MCF 10A (cell line): ENCODE measurements at regions of chr1 and their contacts with region 1.

Region 1: GRCh38 chr1:10803971-10804820 is 7.8 kb upstream of the CASZ1 start:
- DNase-seq: peak; percentile 80
- H3K4me3 Mint-ChIP-seq: peak overlapping the region; percentile 53
- H3K27ac Mint-ChIP-seq: peak overlapping the region; percentile 95
- H3K4me1 Mint-ChIP-seq: peaks cover 20% of the 10 kb centered on the region
- H3K27me3 Mint-ChIP-seq: peaks cover 10% of the 10 kb centered on the region
- CTCF ChIP-seq: no peak

Region 2: DNA sequence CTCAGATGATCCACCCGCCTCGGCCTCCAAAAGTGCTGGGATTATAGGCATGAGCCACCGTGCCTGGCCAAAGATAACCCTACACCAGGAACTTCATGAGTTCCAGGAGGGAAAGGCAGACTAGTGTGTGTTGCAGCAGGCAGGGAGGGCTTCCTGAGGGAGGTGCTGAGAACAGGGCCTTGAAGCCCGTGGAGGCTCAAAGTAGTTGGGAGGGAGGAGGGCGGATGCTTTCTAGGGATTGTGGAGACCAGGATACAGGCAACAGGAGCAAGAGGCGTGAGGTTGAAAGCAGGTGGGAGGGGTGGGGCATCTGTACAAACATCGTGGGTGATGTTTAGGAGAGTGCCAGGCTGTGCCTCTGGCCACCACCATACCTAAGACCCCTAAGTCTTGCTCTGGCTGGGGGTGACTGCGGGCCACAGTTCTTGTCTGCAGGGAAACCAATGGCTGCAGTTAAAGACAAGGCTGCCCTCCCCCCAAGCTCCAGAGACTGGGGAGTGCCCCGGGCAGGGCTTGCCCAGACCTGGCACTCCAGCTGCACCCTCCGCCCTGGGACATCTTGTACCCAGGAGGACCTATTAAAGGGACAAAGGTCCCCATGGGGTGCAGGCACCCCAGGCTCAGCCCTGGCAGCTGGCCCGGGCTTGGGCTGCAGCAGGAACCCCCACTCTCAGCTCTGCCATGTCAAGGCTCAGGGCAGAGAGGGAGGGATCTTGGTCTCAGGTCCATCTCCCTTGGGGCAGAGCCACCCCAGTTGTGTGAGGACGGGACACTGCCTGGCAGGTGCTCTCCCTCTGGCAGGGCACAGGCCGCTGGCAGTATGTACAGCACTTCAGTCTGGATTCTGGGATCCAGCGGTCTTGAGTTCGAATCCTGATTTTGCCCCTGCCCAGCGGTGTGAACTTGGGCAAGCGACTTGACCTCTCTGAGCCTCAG is 14.3 kb after region 1 on chr1:
- CTCF ChIA-PET with region 1: interaction called, 4 read pairs
- POLR2A ChIA-PET with region 1: interaction called, 22 read pairs
- intact Hi-C with region 1: no loop called
- DNase-seq: peak; percentile 76
- H3K4me3 Mint-ChIP-seq: peak overlapping the region; percentile 30
- H3K27ac Mint-ChIP-seq: peak overlapping the region; percentile 73
- H3K4me1 Mint-ChIP-seq: peaks cover 37% of the 10 kb centered on the region
- H3K27me3 Mint-ChIP-seq: no peaks in the 10 kb centered on the region
- CTCF ChIP-seq: no peak

Region 3: GRCh38 chr1:10824821-10825423 is 20.7 kb after region 1 on chr1:
- CTCF ChIA-PET with region 1: interaction called, 4 read pairs
- POLR2A ChIA-PET with region 1: interaction called, 19 read pairs
- intact Hi-C with region 1: no loop called
- DNase-seq: peak; percentile 97
- H3K4me3 Mint-ChIP-seq: peak overlapping the region; percentile 73
- H3K27ac Mint-ChIP-seq: peak overlapping the region; percentile 81
- H3K4me1 Mint-ChIP-seq: peaks cover 29% of the 10 kb centered on the region
- H3K27me3 Mint-ChIP-seq: no peaks in the 10 kb centered on the region
- CTCF ChIP-seq: no peak